Caki2 (cell line): ENCODE measurements at regions of chr11 and their contacts with region 1.

Region 1: GRCh38 chr11:17730608-17731462 is 3.7 kb upstream of the KCNC1 start:
- DNase-seq: peak; percentile 66

Region 2: GRCh38 chr11:17786824-17787525 is 56.1 kb after region 1 on chr11:
- in situ Hi-C with region 1: no loop called
- DNase-seq: no peak

Region 3: DNA sequence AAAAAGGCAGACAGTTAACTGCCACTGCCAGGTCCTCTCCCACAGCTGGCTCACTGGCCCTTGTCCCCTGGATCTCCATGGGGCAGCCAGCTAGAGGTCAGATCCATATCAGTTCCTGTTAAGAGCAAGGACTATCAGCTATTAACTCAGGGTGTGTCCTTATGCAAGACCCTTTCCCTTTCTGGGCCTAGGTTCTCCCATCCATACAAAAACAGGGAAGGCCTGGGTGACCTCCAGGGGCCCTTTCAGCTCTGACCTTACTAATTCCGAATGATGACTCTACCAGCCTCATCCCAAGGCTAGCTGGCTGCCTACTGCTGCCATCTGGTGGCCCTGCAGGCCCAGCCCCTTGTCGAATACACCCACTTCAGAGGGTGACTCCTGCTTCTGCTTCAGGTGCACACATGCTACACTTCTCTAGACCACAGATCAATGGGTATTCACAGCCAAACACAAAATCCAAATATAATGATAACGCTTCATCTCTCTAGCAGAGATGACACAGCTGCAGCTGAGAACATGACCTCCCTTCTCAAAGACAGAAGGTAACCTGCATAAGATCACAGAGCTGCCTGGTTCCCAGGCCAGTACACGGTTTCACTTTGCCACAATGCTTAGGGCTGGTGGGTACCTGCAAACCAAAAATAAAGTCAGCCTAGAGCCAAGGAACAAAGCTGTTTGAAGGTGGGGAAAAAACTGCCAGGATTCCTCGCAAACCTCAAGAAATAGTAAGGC is 247.9 kb after region 1 on chr11:
- in situ Hi-C with region 1: loop called (anchors 10 kb)
- DNase-seq: peak; percentile 27